ENCODE measurements at regions of chr9 and their contacts with region 1.

Region 1: GRCh38 chr9:133992780-133993634 is 883 bp upstream of the VAV2 start:
- DNase-seq: peak; percentile 88
- ATAC-seq: peak; percentile 84 to 91

Region 2: GRCh38 chr9:133792721-133793470 is 200.1 kb before region 1 on chr9:
- intact Hi-C with region 1: loop called (anchors 1 to 5 kb)
- DNase-seq: peak; percentile 86
- ATAC-seq: peak; percentile 85 to 86

Region 3: GRCh38 chr9:134564431-134565170 is 571.6 kb after region 1 on chr9:
- intact Hi-C with region 1: no loop called
- DNase-seq: no peak
- ATAC-seq: no peak

Measured in left cardiac atrium (tissue), 4 donors.